OCI-LY7 (cell line): ENCODE measurements at regions of chr9 and their contacts with region 1.

Region 1: GRCh38 chr9:111916234-111916645 is 19.6 kb downstream of the UGCG start:
- DNase-seq: no peak
- H3K4me3 ChIP-seq: no peak overlapping the region
- H3K27ac ChIP-seq: no peak overlapping the region
- H3K4me1 ChIP-seq: peaks cover 51% of the 10 kb centered on the region
- CTCF ChIP-seq: no peak

Region 2: GRCh38 chr9:111902396-111903147 is 13.7 kb before region 1 on chr9:
- CTCF ChIA-PET with region 1: no interaction called
- POLR2A ChIA-PET with region 1: interaction called, 16 read pairs
- intact Hi-C with region 1: no loop called
- DNase-seq: no peak
- H3K4me3 ChIP-seq: no peak overlapping the region
- H3K27ac ChIP-seq: no peak overlapping the region
- H3K4me1 ChIP-seq: peaks cover 28% of the 10 kb centered on the region
- CTCF ChIP-seq: no peak